Left ventricle myocardium superior (tissue), 1 donor: ENCODE measurements at regions of chr19 and their contacts with region 1.

Region 1: DNA sequence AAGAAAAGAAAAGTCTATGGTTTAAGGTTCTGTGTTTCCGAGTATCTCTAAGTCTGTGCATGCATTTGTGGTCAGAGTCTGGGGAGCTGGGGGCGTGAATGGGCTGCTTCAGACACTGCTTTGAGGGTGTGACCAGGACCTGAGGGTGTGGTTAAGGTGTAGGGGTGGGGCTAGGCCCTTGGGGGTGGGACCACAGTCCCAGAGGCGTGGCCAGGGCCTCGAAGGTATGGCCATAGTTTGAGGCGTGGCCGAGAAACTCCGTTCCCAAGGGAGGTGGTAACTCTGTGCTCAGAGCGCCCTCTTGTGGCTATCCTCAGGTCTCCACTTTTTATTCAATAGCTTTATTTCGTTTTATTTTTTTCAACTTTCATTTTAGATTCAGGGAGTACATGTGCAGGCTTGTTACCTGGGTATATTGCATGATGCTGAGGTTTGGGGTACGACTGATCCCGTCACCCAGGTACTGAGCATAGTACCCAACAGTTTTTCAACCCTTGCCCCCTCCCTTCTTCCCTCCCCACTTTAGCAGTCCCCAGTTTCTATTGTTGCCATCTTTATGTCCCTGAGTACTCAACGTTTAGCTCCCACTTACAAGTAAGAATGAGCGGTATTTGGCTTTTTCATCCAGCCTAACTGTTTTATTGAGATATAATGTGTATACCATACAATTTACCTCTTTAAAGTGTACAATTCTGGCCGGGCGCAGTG is 7.0 kb upstream of the CBLC start:
- DNase-seq: peak; percentile 93
- ATAC-seq: peak; percentile 100

Region 2: DNA sequence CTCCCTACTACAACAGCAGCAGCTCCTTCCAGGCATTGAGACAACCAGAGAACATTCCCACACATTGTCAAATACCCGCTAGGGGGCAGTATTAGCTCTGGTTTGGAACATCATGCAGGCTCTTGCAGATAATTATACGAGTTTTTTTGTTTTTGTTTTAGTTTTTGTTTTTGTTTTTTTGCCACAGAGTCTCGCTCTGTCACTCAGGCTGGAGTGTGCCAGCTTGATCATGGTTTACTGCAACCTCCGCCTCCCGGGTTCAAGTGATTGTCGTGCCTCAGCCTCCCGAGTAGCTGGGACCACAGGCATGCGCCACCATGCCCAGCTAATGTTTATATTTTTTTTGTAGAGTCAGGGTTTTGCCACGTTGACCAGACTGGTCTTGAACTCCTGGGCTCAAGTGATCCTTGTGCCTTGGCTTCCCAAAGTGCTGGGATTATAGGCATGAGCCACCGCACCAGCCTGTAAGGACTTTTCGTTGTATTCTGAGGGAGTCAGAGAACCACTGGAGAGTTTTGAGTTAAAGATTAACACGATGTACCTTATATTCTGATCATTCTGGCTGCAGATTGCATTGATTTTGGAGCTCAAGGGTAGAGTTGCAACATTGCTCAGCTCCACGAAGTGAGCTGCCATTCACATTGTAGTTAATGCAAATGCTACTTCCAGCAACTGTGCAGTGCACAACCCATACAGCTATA is 199.6 kb before region 1 on chr19:
- intact Hi-C with region 1: loop called (anchors 10 kb)
- DNase-seq: no peak
- ATAC-seq: peak; percentile 79

Region 3: GRCh38 chr19:44725251-44725650 is 45.5 kb before region 1 on chr19:
- intact Hi-C with region 1: loop called (anchors 5 kb)
- DNase-seq: no peak
- ATAC-seq: peak; percentile 56